Upper lobe of right lung (tissue), 1 donor: ENCODE measurements at regions of chr1 and their contacts with region 1.

Region 1: DNA sequence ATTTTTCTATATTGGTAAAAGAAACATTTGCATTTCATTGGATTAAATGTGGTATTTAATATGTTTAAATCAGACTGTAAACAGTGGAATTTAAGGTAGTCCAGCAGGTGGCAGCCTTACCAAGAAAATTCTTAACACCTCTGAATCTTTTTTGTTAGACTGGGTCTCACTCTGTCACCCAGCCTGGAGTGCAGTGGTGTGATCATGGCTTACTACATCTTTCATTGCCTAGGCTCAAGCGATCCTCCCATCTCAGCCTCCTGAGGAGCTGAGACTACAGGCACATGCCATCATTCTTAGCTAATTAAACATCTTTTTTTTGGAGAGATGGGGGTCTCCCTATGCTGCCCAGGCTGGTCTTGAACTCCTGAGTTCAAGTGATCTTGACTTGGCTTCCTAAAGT is 98.8 kb downstream of the RABGAP1L start:
- DNase-seq: no peak
- ATAC-seq: peak; percentile 74
- H3K4me3 ChIP-seq: no peak overlapping the region
- H3K27ac ChIP-seq: no peak overlapping the region
- H3K4me1 ChIP-seq: no peaks in the 10 kb centered on the region
- H3K27me3 ChIP-seq: no peaks in the 10 kb centered on the region
- CTCF ChIP-seq: peak; percentile 56

Region 2: DNA sequence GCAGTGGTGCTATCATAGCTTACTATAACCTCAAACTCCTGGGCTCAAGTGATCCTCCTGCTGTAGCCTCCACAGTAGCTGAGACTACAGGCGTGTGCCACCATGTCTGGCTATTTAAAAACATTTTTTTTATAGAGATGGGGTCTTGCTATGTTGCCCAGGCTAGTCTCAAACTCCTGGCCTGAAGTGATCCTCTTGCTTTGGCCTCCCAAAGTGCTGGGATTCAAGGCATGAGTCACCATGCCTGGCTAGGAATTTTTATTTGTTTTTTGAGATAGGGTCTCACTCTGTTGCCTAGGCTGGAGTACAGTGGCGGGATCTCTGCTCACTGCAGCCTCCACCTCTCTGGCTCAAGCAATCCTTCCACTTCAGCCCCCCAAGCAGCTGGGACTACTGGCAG is 107.7 kb before region 1 on chr1:
- intact Hi-C with region 1: no loop called
- DNase-seq: no peak
- ATAC-seq: no peak
- H3K4me3 ChIP-seq: no peak overlapping the region
- H3K27ac ChIP-seq: no peak overlapping the region
- H3K4me1 ChIP-seq: no peaks in the 10 kb centered on the region
- H3K27me3 ChIP-seq: no peaks in the 10 kb centered on the region
- CTCF ChIP-seq: no peak

Region 3: GRCh38 chr1:174217787-174218574 is 40.2 kb before region 1 on chr1:
- intact Hi-C with region 1: no loop called
- DNase-seq: no peak
- ATAC-seq: peak; percentile 67
- H3K4me3 ChIP-seq: no peak overlapping the region
- H3K27ac ChIP-seq: no peak overlapping the region
- H3K4me1 ChIP-seq: no peaks in the 10 kb centered on the region
- H3K27me3 ChIP-seq: no peaks in the 10 kb centered on the region
- CTCF ChIP-seq: peak; percentile 82

Region 4: GRCh38 chr1:174736831-174737230 is 478.7 kb after region 1 on chr1:
- intact Hi-C with region 1: loop called (anchors 10 kb)
- DNase-seq: no peak
- ATAC-seq: no peak
- H3K4me3 ChIP-seq: no peak overlapping the region
- H3K27ac ChIP-seq: no peak overlapping the region
- H3K4me1 ChIP-seq: no peaks in the 10 kb centered on the region
- H3K27me3 ChIP-seq: no peaks in the 10 kb centered on the region
- CTCF ChIP-seq: no peak